ENCODE measurements at regions of chr1 and their contacts with region 1.

Region 1: GRCh38 chr1:154324669-154325582 is at the start of gene ATP8B2:
- DNase-seq: peak in 1 of 2 donors; percentile 87
- H3K4me3 ChIP-seq: peak within 1 kb of the TSS; percentile 73 to 89
- H3K27ac ChIP-seq: peak within 1 kb of the TSS; percentile 95 to 97
- H3K4me1 ChIP-seq: peaks cover 12 to 24% of the 10 kb centered on the region in 2 donors
- H3K27me3 ChIP-seq: no peaks in the 10 kb centered on the region
- CTCF ChIP-seq: peak; percentile 89 to 96 (median 96)
- total RNA-seq, gene ATP8B2: 173 TPM

Region 2: DNA sequence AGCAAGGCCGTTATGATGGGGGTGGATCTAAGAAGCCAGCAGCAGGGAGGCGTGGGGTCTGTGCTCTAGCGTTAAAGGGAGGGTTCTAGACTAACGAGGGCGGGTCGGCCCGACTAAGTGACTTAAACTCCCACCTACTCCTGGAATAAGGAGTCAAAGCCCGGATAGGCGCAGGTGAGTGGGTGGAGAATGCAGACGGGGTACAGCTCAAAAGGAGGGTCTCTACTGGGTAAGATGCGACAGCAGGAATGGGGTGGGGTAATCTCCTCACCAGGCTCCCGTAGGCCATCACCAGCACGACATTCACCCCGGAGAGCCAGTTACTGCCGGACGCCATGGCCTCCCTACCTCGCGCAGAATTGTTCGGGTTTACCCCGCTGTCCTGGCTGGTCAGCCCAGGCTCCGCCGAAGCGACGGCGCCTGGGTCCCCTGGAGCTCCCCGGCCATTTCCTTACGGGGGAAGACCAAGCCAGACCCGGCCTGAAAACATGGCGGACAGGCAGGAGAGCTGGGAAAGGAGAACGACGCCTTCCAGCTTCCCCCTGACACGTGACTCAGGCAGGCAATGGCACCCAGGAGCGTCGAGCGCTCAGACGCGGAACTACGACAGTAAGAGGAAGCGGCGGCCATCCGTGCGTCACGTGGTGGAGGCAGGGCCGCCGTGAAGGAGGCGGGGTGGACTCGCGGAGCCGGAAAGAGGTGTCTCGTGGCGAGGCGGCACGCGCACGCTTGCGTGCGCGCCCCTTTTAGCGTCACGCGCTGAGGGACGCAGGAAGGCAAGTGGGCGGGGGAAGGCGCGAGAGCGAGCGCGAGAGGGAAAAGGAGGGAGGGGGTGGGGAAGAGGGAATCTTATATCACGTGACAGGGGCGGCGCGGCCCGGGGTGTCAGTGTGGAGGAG is 104.6 kb before region 1 on chr1 and contains the start of gene UBAP2L:
- intact Hi-C with region 1: loop called (anchors 2 kb)
- DNase-seq: peak; percentile 96 to 100
- H3K4me3 ChIP-seq: peak within 1 kb of the TSS; percentile 78 to 98
- H3K27ac ChIP-seq: peak within 1 kb of the TSS; percentile 96 to 98
- H3K4me1 ChIP-seq: peaks cover 20 to 25% of the 10 kb centered on the region in 2 donors
- H3K27me3 ChIP-seq: no peaks in the 10 kb centered on the region
- CTCF ChIP-seq: no peak
- total RNA-seq, gene UBAP2L: 67.8 TPM

Region 3: GRCh38 chr1:154272217-154272998 is 52.5 kb before region 1 on chr1 and contains the start of gene HAX1:
- intact Hi-C with region 1: loop called (anchors 1 kb)
- DNase-seq: peak; percentile 87 to 97
- H3K4me3 ChIP-seq: peak within 1 kb of the TSS; percentile 75 to 97
- H3K27ac ChIP-seq: peak within 1 kb of the TSS; percentile 81 to 96
- H3K4me1 ChIP-seq: peaks cover 0 to 5% of the 10 kb centered on the region in 2 donors
- H3K27me3 ChIP-seq: no peaks in the 10 kb centered on the region
- CTCF ChIP-seq: peak; percentile 75 to 90 (median 89)
- total RNA-seq, gene HAX1: 270 TPM

Region 4: DNA sequence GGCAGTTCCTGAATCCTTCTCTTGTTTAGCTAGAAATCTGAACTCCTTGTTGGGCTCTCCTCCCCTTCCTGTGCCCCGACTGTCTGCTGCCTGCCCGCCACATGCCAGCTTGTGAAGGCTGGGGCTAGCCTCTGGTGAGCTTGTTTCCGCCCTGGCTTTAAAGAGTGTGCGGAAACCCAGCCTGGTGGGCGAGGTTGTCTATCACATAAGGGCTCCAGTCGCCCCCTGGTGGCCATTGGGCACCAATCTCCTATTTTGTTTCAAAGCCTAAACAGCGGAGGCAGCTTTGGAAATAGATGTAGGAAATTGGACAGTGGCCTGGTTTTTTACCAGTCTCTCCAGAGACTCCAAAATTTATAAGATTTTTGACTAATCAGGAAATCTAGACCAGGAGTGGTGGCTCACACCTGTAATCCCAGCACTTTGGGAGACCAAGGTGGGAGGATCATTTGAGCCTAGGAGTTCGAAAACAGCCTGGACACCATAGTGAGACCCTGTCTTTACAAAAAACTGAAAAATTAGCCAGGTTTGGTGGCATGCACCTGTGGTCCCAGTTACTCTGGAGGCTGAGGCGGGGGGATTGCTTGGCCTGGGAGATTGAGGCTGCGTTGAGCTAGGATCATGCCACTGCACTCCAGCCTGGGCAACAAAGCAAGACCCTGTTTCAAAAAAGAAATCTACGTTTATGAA is 10.2 kb after region 1 on chr1:
- intact Hi-C with region 1: loop called (anchors 1 kb)
- DNase-seq: peak; percentile 58 to 93
- H3K4me3 ChIP-seq: no peak overlapping the region
- H3K27ac ChIP-seq: peak overlapping the region; percentile 37 to 56
- H3K4me1 ChIP-seq: no peaks in the 10 kb centered on the region
- H3K27me3 ChIP-seq: no peaks in the 10 kb centered on the region
- CTCF ChIP-seq: peak; percentile 71 to 90 (median 82)

Region 5: GRCh38 chr1:154404984-154405761 is 80.2 kb after region 1 on chr1 and contains the start of gene IL6R:
- intact Hi-C with region 1: loop called (anchors 2 kb)
- DNase-seq: peak; percentile 75 to 97
- H3K4me3 ChIP-seq: peak within 1 kb of the TSS; percentile 69 to 73
- H3K27ac ChIP-seq: peak within 1 kb of the TSS; percentile 93 to 94
- H3K4me1 ChIP-seq: peaks cover 0 to 13% of the 10 kb centered on the region in 2 donors
- H3K27me3 ChIP-seq: no peaks in the 10 kb centered on the region
- CTCF ChIP-seq: peak; percentile 30 to 61 (median 50)
- total RNA-seq, gene IL6R: 6.7 TPM

Region 6: GRCh38 chr1:154431586-154432373 is 106.9 kb after region 1 on chr1:
- intact Hi-C with region 1: loop called (anchors 1 kb)
- DNase-seq: peak; percentile 68 to 76
- H3K4me3 ChIP-seq: no peak overlapping the region
- H3K27ac ChIP-seq: no peak overlapping the region
- H3K4me1 ChIP-seq: peaks cover 0 to 21% of the 10 kb centered on the region in 2 donors
- H3K27me3 ChIP-seq: no peaks in the 10 kb centered on the region
- CTCF ChIP-seq: no peak